ENCODE measurements at regions of chr11 and their contacts with region 1.

Region 1: GRCh38 chr11:46083972-46084371 is 37.3 kb downstream of the PHF21A start:
- DNase-seq: no peak

Region 2: GRCh38 chr11:46055371-46055770 is 28.6 kb before region 1 on chr11:
- intact Hi-C with region 1: loop called in 1 of 2 experiments (anchors 1 kb)
- DNase-seq: no peak

Measured in posterior vena cava (tissue), 2 donors.